BJ (cell line): ENCODE measurements at regions of chr1 and their contacts with region 1.

Region 1: GRCh38 chr1:175154629-175155472 is 37.7 kb downstream of the KIAA0040 start:
- DNase-seq: no peak
- H3K4me3 ChIP-seq: no peak overlapping the region
- H3K27me3 ChIP-seq: no peaks in the 10 kb centered on the region; the same call in none of the 2 replicates
- CTCF ChIP-seq: peak; percentile 91

Region 2: DNA sequence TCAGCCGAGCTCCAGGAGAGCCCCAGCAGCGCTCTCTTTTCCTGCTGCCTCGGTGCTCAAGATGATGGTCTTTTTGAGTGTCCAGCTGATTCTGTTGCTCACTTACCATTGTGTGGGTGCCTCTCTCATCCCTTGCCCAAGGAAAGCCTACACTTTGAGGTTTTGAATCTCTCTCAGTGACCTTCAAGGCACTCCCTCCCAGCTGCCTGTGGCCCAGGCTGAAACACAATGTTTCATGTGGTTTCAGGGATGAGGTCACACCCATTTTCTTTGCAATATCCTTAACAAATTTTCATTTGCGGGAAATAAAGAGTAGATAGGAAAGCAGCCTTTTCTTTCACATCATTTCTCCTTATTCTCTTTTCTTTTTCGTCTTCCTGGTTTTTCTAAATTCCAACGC is 119.0 kb before region 1 on chr1:
- CTCF ChIA-PET with region 1: interaction called, 10 read pairs
- POLR2A ChIA-PET with region 1: no interaction called
- DNase-seq: no peak
- H3K4me3 ChIP-seq: no peak overlapping the region
- H3K27me3 ChIP-seq: no peaks in the 10 kb centered on the region
- CTCF ChIP-seq: no peak

Region 3: GRCh38 chr1:175169305-175170018 is 14.6 kb after region 1 on chr1:
- CTCF ChIA-PET with region 1: interaction called, 16 read pairs
- POLR2A ChIA-PET with region 1: no interaction called
- DNase-seq: no peak
- H3K4me3 ChIP-seq: no peak overlapping the region
- H3K27me3 ChIP-seq: no peaks in the 10 kb centered on the region
- CTCF ChIP-seq: no peak

Region 4: GRCh38 chr1:175221666-175222175 is 66.9 kb after region 1 on chr1:
- CTCF ChIA-PET with region 1: interaction called, 11 read pairs
- POLR2A ChIA-PET with region 1: no interaction called
- DNase-seq: no peak
- H3K4me3 ChIP-seq: no peak overlapping the region
- H3K27me3 ChIP-seq: no peaks in the 10 kb centered on the region
- CTCF ChIP-seq: peak; percentile 16; the same call in 1 of the 2 replicates

Region 5: DNA sequence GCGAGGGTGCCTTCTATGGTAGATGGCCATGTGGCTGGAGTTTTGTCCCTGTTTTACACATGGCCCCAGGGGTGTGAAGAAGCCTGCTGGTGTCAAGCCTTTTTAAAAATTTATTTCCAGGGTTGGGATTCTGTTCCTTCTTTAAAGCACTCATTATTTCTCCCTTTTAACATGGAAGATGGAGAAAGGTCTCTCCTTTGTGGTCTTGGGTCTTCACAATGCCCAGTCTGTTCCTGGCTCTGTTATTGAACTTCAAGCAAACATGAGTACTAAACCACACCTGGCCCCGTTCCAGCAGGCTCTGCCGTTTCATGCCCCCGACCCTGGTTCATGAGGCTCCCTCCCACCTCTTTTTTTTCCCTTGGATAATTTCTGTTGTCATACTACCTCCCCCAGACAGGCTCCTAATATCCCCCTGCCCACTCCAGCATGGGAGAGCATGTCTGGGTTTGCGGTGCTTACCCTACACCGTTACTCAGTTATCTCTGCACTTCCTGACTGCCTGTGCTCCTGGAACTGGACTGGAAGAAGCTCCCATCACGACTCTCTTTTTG is 158.9 kb after region 1 on chr1:
- CTCF ChIA-PET with region 1: interaction called, 126 read pairs
- POLR2A ChIA-PET with region 1: no interaction called
- DNase-seq: no peak
- H3K4me3 ChIP-seq: no peak overlapping the region
- H3K27me3 ChIP-seq: no peaks in the 10 kb centered on the region; the same call in 1 of the 2 replicates
- CTCF ChIP-seq: no peak

Region 6: GRCh38 chr1:175331891-175332290 is 177.0 kb after region 1 on chr1:
- CTCF ChIA-PET with region 1: interaction called, 15 read pairs
- POLR2A ChIA-PET with region 1: no interaction called
- DNase-seq: no peak
- H3K4me3 ChIP-seq: no peak overlapping the region
- H3K27me3 ChIP-seq: no peaks in the 10 kb centered on the region
- CTCF ChIP-seq: no peak